Activated CD4-positive, alpha-beta T cell treated with anti-CD3 and anti-CD28 coated beads, Interleukin-2, amount 10 ng/mL, durations not matched to agents 7 days and 5 days (primary cell): ENCODE measurements at regions of chr12 and their contacts with region 1.

Region 1: GRCh38 chr12:120265473-120266179 is at the start of gene PXN:
- DNase-seq: peak; percentile 88
- H3K4me3 Mint-ChIP-seq: peak within 1 kb of the TSS; percentile 88
- H3K27ac Mint-ChIP-seq: peak within 1 kb of the TSS; percentile 83
- H3K4me1 Mint-ChIP-seq: peaks cover 39% of the 10 kb centered on the region
- H3K27me3 Mint-ChIP-seq: no peaks in the 10 kb centered on the region
- total RNA-seq, gene PXN: 201 to 236 TPM

Region 2: GRCh38 chr12:120249875-120250795 is 15.5 kb before region 1 on chr12:
- CTCF ChIA-PET with region 1: interaction called, 18 read pairs
- POLR2A ChIA-PET with region 1: interaction called, 3 read pairs
- DNase-seq: peak; percentile 59
- H3K4me3 Mint-ChIP-seq: peak overlapping the region; percentile 65
- H3K27ac Mint-ChIP-seq: peak overlapping the region; percentile 97
- H3K4me1 Mint-ChIP-seq: peaks cover 82% of the 10 kb centered on the region
- H3K27me3 Mint-ChIP-seq: no peaks in the 10 kb centered on the region

Region 3: DNA sequence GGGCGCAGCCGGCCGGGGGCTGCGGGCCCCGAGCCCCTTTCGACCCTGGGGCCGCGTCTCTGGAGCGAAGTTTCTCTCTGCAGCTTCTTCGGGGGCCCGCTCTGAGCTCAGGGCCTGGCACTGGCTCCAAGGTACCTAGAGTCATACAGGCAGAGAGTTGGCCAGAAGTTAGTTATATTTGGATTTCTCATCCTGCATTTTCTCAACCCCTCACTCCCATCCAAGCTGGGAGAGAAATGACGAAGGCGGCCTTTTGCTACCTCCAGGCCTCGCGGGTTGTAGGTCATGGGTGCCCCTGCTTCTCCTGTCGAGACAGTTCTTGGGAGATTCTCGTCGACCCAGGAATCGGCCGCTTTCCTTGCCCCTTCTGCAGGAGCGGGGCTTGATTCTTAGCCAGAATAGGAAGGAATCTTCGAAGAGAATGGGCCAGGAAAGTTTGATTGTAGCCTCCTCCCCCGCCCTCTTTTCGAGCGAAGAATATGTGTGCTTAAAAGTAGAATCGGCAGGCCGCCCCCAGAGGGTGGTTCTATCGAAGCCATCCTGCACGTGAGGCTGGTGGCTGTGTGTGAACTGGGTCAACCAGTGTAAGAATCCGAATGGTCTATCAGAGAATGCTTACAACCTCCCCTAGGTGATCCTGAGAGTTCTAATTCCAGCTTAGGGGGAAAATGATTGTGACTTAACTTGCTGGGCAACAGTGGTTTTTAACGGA is 422.1 kb after region 1 on chr12:
- CTCF ChIA-PET with region 1: no interaction called
- POLR2A ChIA-PET with region 1: no interaction called
- DNase-seq: peak; percentile 50
- H3K4me3 Mint-ChIP-seq: peak overlapping the region; percentile 89
- H3K27ac Mint-ChIP-seq: peak overlapping the region; percentile 66
- H3K4me1 Mint-ChIP-seq: peaks cover 62% of the 10 kb centered on the region
- H3K27me3 Mint-ChIP-seq: no peaks in the 10 kb centered on the region